SK-N-SH (cell line): ENCODE measurements at regions of chr20 and their contacts with region 1.

Region 1: DNA sequence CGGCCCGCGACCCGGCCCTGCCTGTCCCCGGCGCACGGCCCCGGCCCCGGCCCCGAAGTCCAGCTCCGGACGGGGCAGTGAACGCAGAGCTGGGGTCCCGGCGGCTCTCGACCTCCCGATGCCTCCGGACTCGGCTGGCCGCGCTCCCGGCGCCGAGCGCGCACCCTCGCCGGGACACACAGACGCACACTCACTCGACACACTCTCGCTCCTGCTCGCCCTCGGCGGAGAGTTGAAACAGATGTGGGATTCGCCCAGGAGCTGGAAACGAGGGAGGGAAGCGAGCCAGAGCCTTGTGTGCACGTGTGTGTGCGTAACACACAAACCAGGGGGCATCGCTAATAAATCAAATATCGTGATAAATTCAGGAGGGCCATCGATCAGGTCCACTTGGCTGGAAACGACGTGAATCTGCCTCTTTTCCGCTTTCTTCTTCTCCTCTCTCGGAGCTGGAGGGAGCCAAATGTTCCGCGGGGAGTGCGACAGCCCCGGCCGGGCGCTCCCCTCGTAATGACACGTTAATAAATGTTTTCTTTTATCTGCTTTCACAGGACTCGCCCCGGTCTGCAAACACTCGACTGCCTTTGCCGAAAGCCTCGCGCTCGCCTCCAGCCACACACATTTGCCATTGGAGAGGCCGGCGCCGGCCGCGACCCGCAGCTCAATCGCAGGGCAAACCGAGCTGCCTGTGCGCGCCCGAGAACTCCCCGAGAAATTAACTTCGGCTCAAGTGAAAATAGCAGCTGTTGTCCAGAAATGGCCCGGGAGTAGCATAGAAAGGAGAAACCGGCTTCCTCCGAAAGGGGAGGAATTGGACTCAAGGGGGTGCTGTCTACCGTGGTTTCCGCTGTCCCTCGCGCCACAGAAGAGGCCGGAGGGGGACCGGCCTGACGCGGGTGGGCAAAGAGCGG is 828 bp upstream of the SULF2 start:
- DNase-seq: peak; percentile 86
- H3K4me3 ChIP-seq: peak overlapping the region; percentile 62 to 63
- H3K27ac ChIP-seq: peak overlapping the region in 1 of 2 experiments; percentile 83; a peak in 2 of 4 replicates
- H3K4me1 ChIP-seq: peaks cover 0 to 71% of the 10 kb centered on the region in 2 experiments; a peak in 2 of 4 replicates
- H3K27me3 ChIP-seq: peaks cover 14% of the 10 kb centered on the region; the same call in 1 of the 2 replicates
- CTCF ChIP-seq: peak; percentile 68
- EP300 ChIP-seq: 0 out of 4 replicates have a peak, but pooled peaks of 1 of the 2 experiments have one; percentile 19
- RAD21 ChIP-seq: peak; percentile 88

Region 2: GRCh38 chr20:47576516-47577033 is 209.5 kb before region 1 on chr20:
- CTCF ChIA-PET with region 1: no interaction called
- POLR2A ChIA-PET with region 1: no interaction called
- DNase-seq: peak; percentile 72
- H3K4me3 ChIP-seq: peak overlapping the region in 1 of 2 experiments; percentile 21; a peak in 1 of 4 replicates
- H3K27ac ChIP-seq: peak overlapping the region; percentile 44 to 95
- H3K4me1 ChIP-seq: peaks cover 41 to 43% of the 10 kb centered on the region in 2 experiments
- H3K27me3 ChIP-seq: no peaks in the 10 kb centered on the region
- CTCF ChIP-seq: no peak
- EP300 ChIP-seq: peak in 1 of 2 experiments; percentile 48; a peak in 1 of 4 replicates
- RAD21 ChIP-seq: peak; percentile 18; the same call in 1 of the 2 replicates

Region 3: DNA sequence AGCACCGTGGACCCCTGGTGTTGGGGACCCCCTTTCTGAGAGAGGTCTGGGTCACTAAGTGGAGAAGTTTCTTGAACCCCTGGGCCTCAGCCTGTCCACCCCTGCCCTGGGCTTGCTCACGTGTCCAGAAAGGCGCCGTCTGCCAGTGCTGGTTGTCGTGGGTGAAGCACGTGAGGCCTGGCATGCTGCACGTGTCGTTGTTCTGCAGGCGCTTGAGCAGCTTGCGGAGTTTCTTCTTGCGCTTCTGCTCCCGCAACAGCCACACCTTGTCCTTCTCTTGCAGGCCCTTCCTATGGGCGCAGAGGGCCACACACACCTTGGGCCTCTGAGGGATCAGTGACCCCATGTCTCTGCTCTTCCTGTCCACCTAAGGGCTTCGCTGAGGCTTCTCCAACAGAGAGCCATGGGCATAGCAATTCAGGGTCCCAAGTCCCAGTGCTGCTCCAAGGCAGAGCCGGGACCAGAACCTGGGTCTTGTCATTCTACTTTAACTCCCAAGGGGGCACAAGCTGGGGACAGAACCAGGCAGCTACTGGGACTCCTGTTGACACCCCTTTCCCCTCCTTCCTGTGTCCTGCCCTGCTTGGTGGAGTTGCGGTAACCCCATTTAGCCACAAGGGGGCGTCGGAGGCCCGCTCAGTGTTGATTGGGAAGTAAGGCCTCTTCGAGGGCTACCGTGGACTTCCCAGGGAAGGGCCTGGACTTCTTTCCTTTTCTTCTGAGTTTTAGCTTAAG is 122.6 kb before region 1 on chr20:
- CTCF ChIA-PET with region 1: interaction called, 16 read pairs
- POLR2A ChIA-PET with region 1: no interaction called
- DNase-seq: peak; percentile 87
- H3K4me3 ChIP-seq: peak overlapping the region in 1 of 2 experiments; percentile 20; a peak in 1 of 4 replicates
- H3K27ac ChIP-seq: no peak overlapping the region
- H3K4me1 ChIP-seq: peaks cover 3 to 4% of the 10 kb centered on the region in 2 experiments; a peak in 2 of 4 replicates
- H3K27me3 ChIP-seq: no peaks in the 10 kb centered on the region
- CTCF ChIP-seq: peak; percentile 95
- EP300 ChIP-seq: no peak
- RAD21 ChIP-seq: peak; percentile 92

Region 4: DNA sequence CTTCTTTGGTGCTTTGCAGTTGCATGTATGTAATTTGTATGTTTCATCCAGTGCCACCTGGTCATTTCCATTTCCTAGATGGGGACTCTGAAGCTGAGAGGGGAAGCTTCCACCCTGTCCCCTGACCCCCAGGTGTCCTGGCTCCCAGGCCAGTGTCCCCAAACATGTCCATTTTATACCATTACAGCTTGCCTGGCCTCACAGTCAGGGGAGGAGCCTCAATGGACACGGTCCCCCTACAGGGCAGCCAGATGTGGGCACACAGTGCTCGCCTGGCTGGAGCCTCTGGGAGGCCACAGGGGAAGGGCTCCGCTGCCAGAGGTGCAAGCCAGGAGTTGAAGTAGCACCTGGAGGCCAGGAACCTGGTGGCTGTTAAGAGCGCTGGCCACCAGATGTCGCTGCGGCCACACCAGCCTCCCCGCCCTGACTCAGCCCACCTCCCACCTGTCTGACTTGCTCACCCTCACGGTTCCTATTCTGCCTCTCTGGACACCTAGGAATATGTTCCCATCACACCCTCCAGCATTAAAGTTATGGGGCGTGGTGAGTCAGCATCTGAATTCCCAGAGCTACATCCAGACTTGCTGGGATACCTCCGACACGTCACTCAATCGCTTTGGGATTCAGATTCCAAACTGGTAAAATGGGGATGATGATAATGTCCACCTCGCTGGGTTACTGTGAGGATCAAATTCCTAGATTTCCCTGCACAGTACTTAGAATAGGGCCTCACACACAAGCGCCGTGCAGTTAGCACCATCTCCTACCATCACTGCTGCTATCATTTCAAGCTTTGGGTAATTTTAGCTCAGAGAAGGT is 108.3 kb before region 1 on chr20:
- CTCF ChIA-PET with region 1: interaction called, 32 read pairs
- POLR2A ChIA-PET with region 1: no interaction called
- DNase-seq: peak; percentile 83
- H3K4me3 ChIP-seq: no peak overlapping the region; a peak in 1 of 4 replicates
- H3K27ac ChIP-seq: no peak overlapping the region
- H3K4me1 ChIP-seq: peaks cover 0 to 5% of the 10 kb centered on the region in 2 experiments; a peak in 1 of 4 replicates
- H3K27me3 ChIP-seq: no peaks in the 10 kb centered on the region
- CTCF ChIP-seq: peak; percentile 57
- EP300 ChIP-seq: no peak
- RAD21 ChIP-seq: peak; percentile 84

Region 5: DNA sequence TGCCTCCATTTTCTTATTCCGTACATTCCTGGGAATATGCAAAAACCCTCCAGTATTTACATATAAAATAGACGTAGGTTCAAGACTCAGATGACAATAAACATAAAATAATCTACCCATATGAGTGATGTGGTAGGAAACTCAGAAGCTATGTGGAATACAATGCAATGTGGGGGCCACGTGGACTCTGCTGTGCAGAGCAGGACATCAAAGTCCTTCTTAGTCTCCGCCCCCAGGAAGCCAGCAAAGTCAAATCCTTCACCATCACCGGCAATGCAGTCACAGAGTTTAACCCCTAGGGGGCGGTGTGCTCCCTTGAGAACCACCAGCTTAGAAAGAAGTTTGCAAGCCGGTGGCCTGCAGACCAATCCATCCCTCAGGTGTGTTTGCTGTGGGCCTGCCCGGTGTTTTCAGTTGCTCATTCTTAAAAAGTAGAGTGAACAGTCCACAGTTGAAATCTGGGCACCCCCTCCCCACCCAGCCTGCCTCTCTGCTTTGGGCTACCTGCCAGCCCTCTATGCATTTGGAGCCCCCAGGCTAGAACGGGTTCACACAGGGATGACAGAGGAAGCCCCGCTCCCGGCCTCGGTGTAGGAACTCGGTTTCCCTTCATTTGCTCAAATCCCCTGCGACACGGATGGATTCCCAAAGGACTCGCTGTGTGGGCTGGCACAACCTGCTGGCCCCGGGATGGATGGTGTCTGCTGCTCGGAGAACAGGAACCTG is 60.7 kb before region 1 on chr20:
- CTCF ChIA-PET with region 1: interaction called, 22 read pairs
- POLR2A ChIA-PET with region 1: no interaction called
- DNase-seq: peak; percentile 81
- H3K4me3 ChIP-seq: peak overlapping the region in 1 of 2 experiments; percentile 25; a peak in 1 of 4 replicates
- H3K27ac ChIP-seq: no peak overlapping the region
- H3K4me1 ChIP-seq: peaks cover 0 to 7% of the 10 kb centered on the region in 2 experiments; a peak in 1 of 4 replicates
- H3K27me3 ChIP-seq: no peaks in the 10 kb centered on the region
- CTCF ChIP-seq: peak; percentile 85
- EP300 ChIP-seq: no peak
- RAD21 ChIP-seq: peak; percentile 89

Region 6: DNA sequence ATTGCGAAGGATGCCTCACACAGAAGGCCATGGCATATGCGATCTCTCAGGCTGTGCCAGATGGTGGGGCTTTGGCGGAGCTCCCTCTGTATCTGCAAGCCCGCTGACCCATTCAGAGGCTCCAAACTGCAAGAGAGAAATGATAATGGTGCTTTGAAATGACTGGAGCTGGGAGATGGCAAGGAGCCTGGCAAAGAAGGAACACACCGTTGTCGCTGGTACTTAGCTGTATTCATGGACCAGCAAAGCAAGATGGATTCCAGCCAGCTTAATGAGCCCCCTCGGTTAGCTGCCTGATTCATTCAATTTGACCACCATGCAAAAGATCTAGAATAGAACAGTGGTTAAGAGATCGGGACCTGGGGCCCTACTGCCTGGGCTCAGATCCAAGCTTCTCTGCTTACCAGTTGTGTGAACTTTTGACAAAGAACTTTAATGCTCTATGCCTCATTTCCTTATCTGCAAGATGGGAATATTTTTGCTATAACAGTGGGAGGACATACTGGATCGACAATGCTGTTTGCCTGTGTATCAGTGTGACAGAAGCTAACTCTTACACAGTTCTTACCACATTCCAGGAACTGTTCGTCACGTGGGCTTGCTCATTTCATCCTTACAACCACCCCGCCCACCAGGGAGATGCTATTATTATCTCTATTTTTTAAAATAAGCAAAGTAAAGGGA is 316.9 kb after region 1 on chr20:
- CTCF ChIA-PET with region 1: no interaction called
- POLR2A ChIA-PET with region 1: no interaction called
- DNase-seq: no peak
- H3K4me3 ChIP-seq: no peak overlapping the region
- H3K27ac ChIP-seq: no peak overlapping the region
- H3K4me1 ChIP-seq: no peaks in the 10 kb centered on the region; a peak in 1 of 4 replicates
- H3K27me3 ChIP-seq: no peaks in the 10 kb centered on the region
- CTCF ChIP-seq: no peak
- EP300 ChIP-seq: no peak
- RAD21 ChIP-seq: no peak

Region 7: DNA sequence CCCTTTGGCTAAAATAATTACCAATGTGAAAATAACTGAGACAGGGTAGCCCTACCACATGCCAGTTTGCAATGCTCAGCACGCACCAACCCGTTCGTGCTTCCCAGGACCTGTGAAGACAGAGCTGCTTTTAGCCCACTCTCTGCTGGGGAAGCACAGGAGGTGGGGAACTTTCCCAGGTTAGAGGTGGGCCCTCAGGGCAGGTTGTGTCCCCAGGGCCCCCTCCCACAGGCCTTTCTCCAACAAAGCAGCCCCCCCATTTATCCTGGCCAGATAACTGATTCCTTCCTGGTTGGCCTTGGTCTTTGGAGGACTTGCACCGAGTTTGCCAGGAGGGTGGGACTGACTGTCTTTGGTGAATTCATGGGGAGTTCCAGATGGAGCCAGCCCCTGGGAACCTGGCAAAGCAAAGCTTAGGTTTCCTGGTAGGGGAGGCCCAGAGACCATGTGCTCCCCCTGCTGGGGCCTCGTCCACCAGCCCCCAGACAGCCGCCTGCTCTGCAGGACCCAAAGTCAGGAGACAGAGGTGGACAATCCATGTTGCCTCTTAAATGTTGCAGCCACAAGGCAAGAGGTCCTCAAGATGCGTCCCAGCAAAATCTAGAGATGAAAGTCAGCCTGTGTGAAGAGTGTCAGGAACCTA is 543.6 kb after region 1 on chr20:
- CTCF ChIA-PET with region 1: interaction called, 12 read pairs
- POLR2A ChIA-PET with region 1: no interaction called
- DNase-seq: peak; percentile 78
- H3K4me3 ChIP-seq: no peak overlapping the region
- H3K27ac ChIP-seq: peak overlapping the region in 1 of 2 experiments; percentile 68; a peak in 2 of 4 replicates
- H3K4me1 ChIP-seq: peaks cover 7 to 8% of the 10 kb centered on the region in 2 experiments; a peak in 3 of 4 replicates
- H3K27me3 ChIP-seq: no peaks in the 10 kb centered on the region
- CTCF ChIP-seq: peak; percentile 50
- EP300 ChIP-seq: no peak
- RAD21 ChIP-seq: peak; percentile 62

Region 8: GRCh38 chr20:48556956-48557355 is 770.8 kb after region 1 on chr20:
- CTCF ChIA-PET with region 1: interaction called, 13 read pairs
- POLR2A ChIA-PET with region 1: no interaction called
- DNase-seq: peak; percentile 57
- H3K4me3 ChIP-seq: no peak overlapping the region
- H3K27ac ChIP-seq: peak overlapping the region in 1 of 2 experiments; percentile 76; a peak in 2 of 4 replicates
- H3K4me1 ChIP-seq: peaks cover 0 to 27% of the 10 kb centered on the region in 2 experiments; a peak in 2 of 4 replicates
- H3K27me3 ChIP-seq: no peaks in the 10 kb centered on the region; the same call in 1 of the 2 replicates
- CTCF ChIP-seq: no peak
- EP300 ChIP-seq: no peak
- RAD21 ChIP-seq: no peak

Region 9: GRCh38 chr20:48626226-48626937 is 840.3 kb after region 1 on chr20:
- CTCF ChIA-PET with region 1: interaction called, 103 read pairs
- POLR2A ChIA-PET with region 1: no interaction called
- DNase-seq: no peak
- H3K4me3 ChIP-seq: no peak overlapping the region
- H3K27ac ChIP-seq: no peak overlapping the region
- H3K4me1 ChIP-seq: peaks cover 0 to 2% of the 10 kb centered on the region in 2 experiments; a peak in 1 of 4 replicates
- H3K27me3 ChIP-seq: no peaks in the 10 kb centered on the region
- CTCF ChIP-seq: no peak
- EP300 ChIP-seq: no peak
- RAD21 ChIP-seq: no peak